ENCODE measurements at regions of chr3 and their contacts with region 1.

Region 1: DNA sequence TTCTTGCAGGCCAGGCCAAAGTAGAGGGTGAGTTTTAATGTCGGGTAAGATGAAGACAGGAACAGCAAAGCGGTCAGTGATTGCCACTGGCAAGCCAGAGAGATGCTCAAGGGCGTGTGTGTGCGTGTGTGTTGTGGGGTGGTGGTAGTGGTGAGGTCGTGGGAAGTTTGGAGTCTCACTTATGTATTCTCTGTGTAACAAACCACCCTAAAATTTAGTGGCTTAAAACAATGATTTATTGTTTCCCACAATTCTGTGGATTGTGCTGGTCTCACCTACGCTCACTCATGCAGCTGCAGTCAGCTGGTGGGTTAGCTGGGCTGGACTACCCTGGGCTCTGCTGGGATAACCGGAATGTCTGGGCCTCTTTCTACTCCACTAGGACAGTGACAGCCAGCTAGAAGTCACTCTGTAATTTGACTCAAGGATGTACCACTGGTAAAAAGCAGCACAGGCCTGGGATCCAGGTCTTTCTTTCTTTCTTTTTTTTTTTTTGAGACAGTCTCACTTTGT is 50.9 kb upstream of the BHLHE40 start:
- DNase-seq: no peak
- ATAC-seq: peak; percentile 58
- H3K4me3 ChIP-seq: no peak overlapping the region
- H3K27ac ChIP-seq: no peak overlapping the region
- H3K4me1 ChIP-seq: peaks cover 19% of the 10 kb centered on the region
- H3K27me3 ChIP-seq: no peaks in the 10 kb centered on the region
- CTCF ChIP-seq: no peak
- EP300 ChIP-seq: peak; percentile 18 to 20; a peak in 2 of 4 replicates
- POLR2A ChIP-seq: no peak
- RAD21 ChIP-seq: no peak

Region 2: DNA sequence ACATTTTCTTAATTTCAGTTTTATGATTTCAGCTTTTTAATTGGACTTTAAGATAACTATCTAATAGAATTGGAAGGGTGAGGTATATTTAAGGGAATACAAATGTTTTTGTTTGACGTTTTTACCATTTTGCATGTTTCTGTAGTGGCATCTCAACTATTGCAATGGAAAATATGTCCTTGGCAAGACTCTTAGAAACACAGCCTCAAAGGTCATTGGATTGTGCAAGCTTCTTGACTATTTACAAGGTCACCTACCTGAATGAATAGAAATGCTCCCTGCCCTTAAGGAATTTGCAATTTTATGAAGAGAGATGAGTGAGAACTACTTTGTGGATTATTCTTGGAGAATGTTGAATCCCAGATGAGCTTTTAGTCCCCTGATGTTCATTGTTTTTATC is 392.1 kb before region 1 on chr3:
- CTCF ChIA-PET with region 1: no interaction called
- POLR2A ChIA-PET with region 1: no interaction called
- RAD21 ChIA-PET with region 1: no interaction called
- SMC1A ChIA-PET with region 1: no interaction called
- in situ Hi-C with region 1: no loop called
- intact Hi-C with region 1: no loop called
- DNase-seq: no peak
- ATAC-seq: no peak
- H3K4me3 ChIP-seq: no peak overlapping the region
- H3K27ac ChIP-seq: no peak overlapping the region
- H3K4me1 ChIP-seq: no peaks in the 10 kb centered on the region
- H3K27me3 ChIP-seq: no peaks in the 10 kb centered on the region
- CTCF ChIP-seq: no peak
- EP300 ChIP-seq: no peak
- POLR2A ChIP-seq: no peak
- RAD21 ChIP-seq: no peak

Region 3: GRCh38 chr3:4633078-4634004 is 295.0 kb before region 1 on chr3:
- CTCF ChIA-PET with region 1: no interaction called
- POLR2A ChIA-PET with region 1: no interaction called
- RAD21 ChIA-PET with region 1: no interaction called
- SMC1A ChIA-PET with region 1: no interaction called
- in situ Hi-C with region 1: no loop called
- intact Hi-C with region 1: no loop called
- DNase-seq: peak; percentile 30
- ATAC-seq: peak; percentile 86
- H3K4me3 ChIP-seq: no peak overlapping the region
- H3K27ac ChIP-seq: no peak overlapping the region
- H3K4me1 ChIP-seq: no peaks in the 10 kb centered on the region
- H3K27me3 ChIP-seq: no peaks in the 10 kb centered on the region
- CTCF ChIP-seq: peak; percentile 75 to 81 (median 77)
- EP300 ChIP-seq: no peak
- POLR2A ChIP-seq: no peak
- RAD21 ChIP-seq: peak; percentile 93

Region 4: DNA sequence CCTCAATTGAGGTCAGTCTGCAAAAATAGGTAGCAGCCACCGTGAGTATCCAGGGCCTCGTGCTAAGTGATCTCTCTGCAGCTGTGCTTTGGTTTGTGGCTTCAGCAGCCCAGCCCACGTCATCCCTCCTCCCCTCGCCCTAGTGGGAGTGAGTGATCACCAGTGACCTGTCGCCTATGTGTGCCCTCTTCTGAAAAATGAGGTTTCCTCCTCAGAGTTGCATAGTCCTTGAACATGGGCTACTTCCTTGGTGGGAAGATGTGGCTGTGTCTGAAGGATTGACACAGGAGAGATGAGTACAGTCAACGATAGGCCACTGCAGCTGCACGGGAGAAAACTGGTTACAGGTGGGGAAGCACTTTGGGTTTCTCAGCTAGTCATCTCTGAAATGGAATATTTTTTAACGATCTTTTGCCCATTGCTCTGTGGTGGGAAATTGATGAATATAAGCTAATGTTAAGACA is 93.9 kb before region 1 on chr3:
- CTCF ChIA-PET with region 1: interaction called, 3 read pairs
- POLR2A ChIA-PET with region 1: no interaction called
- RAD21 ChIA-PET with region 1: no interaction called
- SMC1A ChIA-PET with region 1: interaction called, 3 read pairs
- in situ Hi-C with region 1: no loop called
- intact Hi-C with region 1: loop called (anchors 5 kb)
- DNase-seq: no peak
- ATAC-seq: peak; percentile 63
- H3K4me3 ChIP-seq: no peak overlapping the region
- H3K27ac ChIP-seq: peak overlapping the region; percentile 43; the same call in 1 of the 2 replicates
- H3K4me1 ChIP-seq: peaks cover 43% of the 10 kb centered on the region
- H3K27me3 ChIP-seq: no peaks in the 10 kb centered on the region
- CTCF ChIP-seq: no peak
- EP300 ChIP-seq: peak; percentile 89 to 95; a peak in 3 of 4 replicates
- POLR2A ChIP-seq: no peak
- RAD21 ChIP-seq: 0 out of 2 replicates have a peak, but pooled peaks have one; percentile 4

Region 5: DNA sequence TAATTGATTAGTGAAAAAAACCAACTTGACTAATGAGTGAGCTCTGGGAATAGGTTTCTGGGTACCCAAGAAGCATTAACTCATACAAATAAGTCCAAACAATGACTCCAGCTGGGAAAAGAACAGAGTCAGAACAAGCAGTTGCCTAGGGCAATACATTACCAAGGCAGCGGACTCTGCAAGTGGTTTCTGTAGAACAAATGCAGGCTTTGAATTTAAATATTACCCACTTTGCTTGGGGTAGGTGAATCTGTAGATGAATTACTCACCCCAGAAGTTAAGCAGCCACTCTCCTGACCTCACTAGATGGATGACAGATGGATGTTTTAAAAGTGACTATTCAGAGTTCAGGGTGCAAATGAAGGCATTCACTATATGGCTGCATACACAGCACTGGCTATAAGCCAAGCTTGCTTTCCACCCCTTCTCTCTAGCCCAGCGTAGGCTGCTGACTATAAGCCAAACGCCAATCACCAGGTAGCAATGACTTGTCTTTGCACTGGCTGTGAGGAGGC is 22.2 kb before region 1 on chr3:
- CTCF ChIA-PET with region 1: interaction called, 3 read pairs
- POLR2A ChIA-PET with region 1: interaction called, 4 read pairs
- RAD21 ChIA-PET with region 1: interaction called, 10 read pairs
- SMC1A ChIA-PET with region 1: interaction called, 6 read pairs
- in situ Hi-C with region 1: no loop called
- intact Hi-C with region 1: loop called (anchors 2 kb)
- DNase-seq: no peak
- ATAC-seq: peak; percentile 73
- H3K4me3 ChIP-seq: no peak overlapping the region
- H3K27ac ChIP-seq: no peak overlapping the region
- H3K4me1 ChIP-seq: peaks cover 22% of the 10 kb centered on the region
- H3K27me3 ChIP-seq: no peaks in the 10 kb centered on the region
- CTCF ChIP-seq: no peak
- EP300 ChIP-seq: no peak
- POLR2A ChIP-seq: no peak
- RAD21 ChIP-seq: no peak

Region 6: GRCh38 chr3:4957978-4958377 is 29.6 kb after region 1 on chr3:
- CTCF ChIA-PET with region 1: no interaction called
- POLR2A ChIA-PET with region 1: no interaction called
- RAD21 ChIA-PET with region 1: no interaction called
- SMC1A ChIA-PET with region 1: interaction called, 10 read pairs
- in situ Hi-C with region 1: no loop called
- intact Hi-C with region 1: no loop called
- DNase-seq: no peak
- ATAC-seq: no peak
- H3K4me3 ChIP-seq: no peak overlapping the region
- H3K27ac ChIP-seq: no peak overlapping the region
- H3K4me1 ChIP-seq: no peaks in the 10 kb centered on the region
- H3K27me3 ChIP-seq: no peaks in the 10 kb centered on the region
- CTCF ChIP-seq: no peak
- EP300 ChIP-seq: no peak
- POLR2A ChIP-seq: no peak
- RAD21 ChIP-seq: no peak